GM12878 (cell line): ENCODE measurements at regions of chr6 and their contacts with region 1.

Region 1: DNA sequence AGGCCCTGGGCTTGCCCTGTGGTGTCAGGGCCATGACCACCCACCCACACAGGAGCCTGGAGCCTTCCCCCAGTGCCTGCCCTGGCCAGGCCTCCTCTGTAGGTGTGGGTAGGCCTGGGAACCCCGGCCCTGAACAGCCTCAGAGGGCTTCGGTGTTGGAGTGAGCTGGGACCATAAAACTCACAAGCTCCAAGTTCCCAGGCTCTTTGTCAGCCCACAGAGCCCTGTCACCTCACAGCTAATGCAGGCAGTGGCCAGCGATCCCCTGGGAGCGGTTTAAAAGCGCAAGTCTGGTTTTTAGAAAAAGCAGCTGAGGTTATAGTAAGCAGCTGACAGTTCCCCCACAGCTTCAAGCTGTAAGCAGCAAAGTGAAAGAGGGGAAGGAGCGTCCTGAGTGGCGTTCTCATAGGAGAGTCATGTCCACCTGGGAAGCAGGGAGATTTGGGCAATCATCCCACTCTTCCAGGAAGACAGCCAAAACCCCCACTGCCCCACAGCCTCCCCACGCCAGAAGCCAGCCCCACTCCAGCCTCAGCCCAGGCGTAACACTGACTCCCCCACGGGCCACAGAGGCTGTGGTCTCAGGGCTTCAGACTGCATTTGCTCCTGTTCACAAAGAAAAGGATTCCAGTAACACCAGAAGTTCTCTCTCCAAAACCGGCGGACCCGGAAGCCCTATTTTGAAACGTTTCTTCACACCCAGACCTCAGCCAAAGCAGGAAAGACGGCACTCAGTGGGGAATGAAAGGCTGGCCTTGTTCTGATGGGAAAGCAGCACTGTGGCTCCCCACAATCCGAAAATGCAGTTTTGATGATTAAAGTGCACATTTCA is 34.3 kb upstream of the FOXC1 start:
- DNase-seq: peak; percentile 67
- ATAC-seq: peak; percentile 75
- H3K4me3 ChIP-seq: no peak overlapping the region
- H3K27ac ChIP-seq: no peak overlapping the region
- H3K4me1 ChIP-seq: peaks cover 22% of the 10 kb centered on the region
- H3K27me3 ChIP-seq: peaks cover 0 to 2% of the 10 kb centered on the region in 2 experiments; a peak in 1 of 4 replicates
- CTCF ChIP-seq: no peak
- EP300 ChIP-seq: peak; percentile 17 to 60; a peak in 1 of 4 replicates
- POLR2A ChIP-seq: no peak
- RAD21 ChIP-seq: no peak

Region 2: DNA sequence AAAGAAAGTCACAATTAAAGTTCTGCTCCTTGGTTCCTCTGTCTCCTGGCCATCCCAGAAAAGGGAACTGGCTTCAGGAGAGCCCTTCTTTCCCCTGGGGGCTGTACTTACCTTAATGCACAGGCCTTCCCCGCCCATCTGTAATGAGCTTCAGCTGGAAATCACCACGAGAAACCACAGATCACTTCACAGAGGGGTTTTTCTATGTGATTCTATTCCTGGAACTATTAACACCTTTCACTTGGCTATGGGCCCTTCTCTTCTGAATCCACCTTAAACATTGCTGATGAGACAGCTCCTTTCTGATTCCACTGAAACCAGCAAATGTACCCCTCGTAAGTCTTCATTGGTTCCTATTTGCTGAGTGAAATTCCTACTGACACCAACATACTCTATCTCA is 105.4 kb before region 1 on chr6:
- CTCF ChIA-PET with region 1: interaction called, 3 read pairs
- POLR2A ChIA-PET with region 1: interaction called, 12 read pairs
- RAD21 ChIA-PET with region 1: interaction called, 14 read pairs
- SMC1A ChIA-PET with region 1: interaction called, 5 read pairs
- in situ Hi-C with region 1: no loop called
- intact Hi-C with region 1: no loop called
- DNase-seq: peak; percentile 74
- ATAC-seq: peak; percentile 93
- H3K4me3 ChIP-seq: peak overlapping the region; percentile 35; the same call in 1 of the 2 replicates
- H3K27ac ChIP-seq: peak overlapping the region; percentile 57
- H3K4me1 ChIP-seq: peaks cover 34% of the 10 kb centered on the region
- H3K27me3 ChIP-seq: no peaks in the 10 kb centered on the region
- CTCF ChIP-seq: no peak
- EP300 ChIP-seq: peak; percentile 50 to 76; a peak in 2 of 4 replicates
- POLR2A ChIP-seq: no peak
- RAD21 ChIP-seq: no peak

Region 3: DNA sequence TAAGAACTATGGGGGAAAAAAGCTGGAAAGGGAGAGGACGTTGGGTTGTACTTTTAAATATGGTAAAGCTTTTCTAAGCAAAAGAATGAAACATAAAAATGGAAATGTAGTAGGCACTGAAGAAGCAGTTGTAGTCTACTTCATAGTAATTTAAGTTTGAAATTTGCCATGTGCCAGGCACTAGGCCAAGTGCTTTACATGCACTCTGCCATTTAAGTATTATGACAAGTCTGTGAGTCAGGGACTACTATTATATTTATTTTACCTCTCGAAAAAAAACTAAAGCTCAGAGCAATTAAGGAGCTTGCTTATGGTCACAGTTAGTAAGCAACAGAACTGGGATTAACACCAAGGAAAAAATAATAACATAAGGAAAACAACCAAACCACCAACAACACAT is 412.2 kb after region 1 on chr6:
- CTCF ChIA-PET with region 1: no interaction called
- POLR2A ChIA-PET with region 1: no interaction called
- RAD21 ChIA-PET with region 1: no interaction called
- SMC1A ChIA-PET with region 1: no interaction called
- in situ Hi-C with region 1: no loop called
- intact Hi-C with region 1: no loop called
- DNase-seq: no peak
- ATAC-seq: no peak
- H3K4me3 ChIP-seq: no peak overlapping the region
- H3K27ac ChIP-seq: no peak overlapping the region
- H3K4me1 ChIP-seq: no peaks in the 10 kb centered on the region
- H3K27me3 ChIP-seq: no peaks in the 10 kb centered on the region
- CTCF ChIP-seq: no peak
- EP300 ChIP-seq: no peak
- POLR2A ChIP-seq: no peak
- RAD21 ChIP-seq: no peak